Aorta (tissue), 5 donors: ENCODE measurements at regions of chr13 and their contacts with region 1.

Region 1: DNA sequence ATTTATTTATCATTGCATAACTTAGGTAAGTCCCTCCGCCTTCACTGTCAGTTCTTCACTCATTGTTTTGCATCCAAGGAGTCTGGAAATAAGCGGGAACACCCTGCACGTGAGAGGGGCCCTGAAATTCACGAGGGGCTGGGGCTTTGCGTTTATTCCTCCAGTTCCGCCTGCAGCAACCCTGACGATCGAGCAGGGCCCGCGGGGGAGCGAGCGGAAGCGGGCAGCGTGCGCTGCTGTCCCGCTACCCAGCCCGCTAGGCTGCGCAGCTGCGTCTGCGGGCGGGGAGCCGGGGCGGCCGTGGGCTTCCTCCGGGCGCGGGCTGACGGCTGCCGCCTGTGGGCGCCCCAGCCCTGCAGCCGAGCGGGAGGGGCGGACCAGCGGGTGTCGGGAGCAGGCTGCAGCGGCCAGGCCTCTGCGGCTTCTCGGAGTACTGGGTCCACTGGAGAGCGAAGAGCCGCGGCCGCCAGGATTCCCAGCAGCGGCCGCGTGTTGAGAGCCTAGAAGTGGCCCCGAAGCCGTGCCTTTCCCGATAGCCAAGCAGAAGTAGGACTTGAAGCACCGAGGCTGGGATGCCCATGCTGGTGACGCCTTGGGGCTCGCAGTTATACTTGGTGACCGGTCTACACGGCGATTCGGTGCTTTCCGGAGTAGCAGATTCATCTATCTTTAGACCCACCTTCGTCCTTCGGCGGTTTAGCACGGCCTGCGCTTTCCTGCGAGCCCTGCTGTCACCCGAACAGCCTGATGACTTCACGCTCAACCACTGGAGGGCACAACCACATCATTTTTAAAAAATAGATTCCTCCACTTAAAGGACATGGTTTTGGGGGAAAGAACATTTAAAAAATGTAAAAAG is 32.9 kb upstream of the SACS start:
- DNase-seq: peak; percentile 77 to 86
- ATAC-seq: peak; percentile 94
- H3K4me3 ChIP-seq: peak overlapping the region in 1 of 2 donors; percentile 7
- H3K27ac ChIP-seq: peak overlapping the region in 1 of 2 donors; percentile 22
- H3K4me1 ChIP-seq: peaks cover 4 to 5% of the 10 kb centered on the region in 2 donors
- H3K27me3 ChIP-seq: no peaks in the 10 kb centered on the region

Region 2: DNA sequence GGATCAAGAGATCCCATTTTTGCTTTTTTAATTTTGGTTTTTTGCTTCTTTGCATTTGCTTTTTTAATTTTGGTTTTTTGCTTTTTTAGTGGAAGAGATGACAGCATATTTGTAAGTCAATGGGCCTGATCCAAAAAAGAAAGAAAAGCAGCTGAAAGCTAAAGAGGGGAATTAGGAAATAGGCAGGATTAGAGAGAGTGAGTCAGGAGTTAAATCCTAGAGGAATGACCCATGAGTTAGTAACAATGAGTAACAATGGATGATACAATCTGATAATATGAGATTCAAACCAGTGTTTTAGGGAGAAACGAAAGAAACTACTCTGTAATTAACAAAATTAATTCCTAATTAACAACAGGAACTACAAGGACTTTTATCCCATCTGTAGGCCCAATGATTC is 396.8 kb before region 1 on chr13:
- intact Hi-C with region 1: no loop called
- DNase-seq: no peak
- ATAC-seq: no peak
- H3K4me3 ChIP-seq: no peak overlapping the region
- H3K27ac ChIP-seq: no peak overlapping the region
- H3K4me1 ChIP-seq: no peaks in the 10 kb centered on the region
- H3K27me3 ChIP-seq: no peaks in the 10 kb centered on the region

Region 3: DNA sequence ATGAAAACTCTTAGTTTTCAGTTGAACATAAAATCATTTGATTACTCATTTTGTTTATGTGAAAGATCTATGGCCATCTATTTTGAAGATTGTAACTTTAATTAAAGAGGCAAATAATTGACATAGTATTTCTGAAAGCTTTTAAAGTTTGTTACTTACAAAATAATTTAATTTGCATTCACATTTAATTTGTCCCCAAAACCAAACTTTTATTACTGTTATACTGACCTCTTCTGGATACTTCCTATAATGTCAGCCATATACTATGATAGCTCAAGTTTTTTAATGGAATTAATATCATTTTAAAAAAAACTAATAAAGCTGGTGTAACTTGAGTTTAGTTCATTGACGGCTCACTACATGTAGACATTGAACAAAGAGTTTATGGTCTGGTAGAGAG is 290.5 kb before region 1 on chr13:
- intact Hi-C with region 1: no loop called
- DNase-seq: no peak
- ATAC-seq: no peak
- H3K4me3 ChIP-seq: no peak overlapping the region
- H3K27ac ChIP-seq: no peak overlapping the region
- H3K4me1 ChIP-seq: no peaks in the 10 kb centered on the region
- H3K27me3 ChIP-seq: no peaks in the 10 kb centered on the region

Region 4: GRCh38 chr13:23477101-23477500 is 10.7 kb after region 1 on chr13:
- intact Hi-C with region 1: no loop called
- DNase-seq: no peak
- ATAC-seq: no peak
- H3K4me3 ChIP-seq: no peak overlapping the region
- H3K27ac ChIP-seq: no peak overlapping the region
- H3K4me1 ChIP-seq: no peaks in the 10 kb centered on the region
- H3K27me3 ChIP-seq: no peaks in the 10 kb centered on the region

Region 5: GRCh38 chr13:23579072-23579895 is 112.9 kb after region 1 on chr13:
- intact Hi-C with region 1: loop called in 1 of 2 experiments (anchors 5 kb)
- DNase-seq: peak; percentile 92 to 97
- ATAC-seq: peak; percentile 99
- H3K4me3 ChIP-seq: peak overlapping the region; percentile 24 to 55
- H3K27ac ChIP-seq: no peak overlapping the region
- H3K4me1 ChIP-seq: no peaks in the 10 kb centered on the region
- H3K27me3 ChIP-seq: no peaks in the 10 kb centered on the region

Region 6: DNA sequence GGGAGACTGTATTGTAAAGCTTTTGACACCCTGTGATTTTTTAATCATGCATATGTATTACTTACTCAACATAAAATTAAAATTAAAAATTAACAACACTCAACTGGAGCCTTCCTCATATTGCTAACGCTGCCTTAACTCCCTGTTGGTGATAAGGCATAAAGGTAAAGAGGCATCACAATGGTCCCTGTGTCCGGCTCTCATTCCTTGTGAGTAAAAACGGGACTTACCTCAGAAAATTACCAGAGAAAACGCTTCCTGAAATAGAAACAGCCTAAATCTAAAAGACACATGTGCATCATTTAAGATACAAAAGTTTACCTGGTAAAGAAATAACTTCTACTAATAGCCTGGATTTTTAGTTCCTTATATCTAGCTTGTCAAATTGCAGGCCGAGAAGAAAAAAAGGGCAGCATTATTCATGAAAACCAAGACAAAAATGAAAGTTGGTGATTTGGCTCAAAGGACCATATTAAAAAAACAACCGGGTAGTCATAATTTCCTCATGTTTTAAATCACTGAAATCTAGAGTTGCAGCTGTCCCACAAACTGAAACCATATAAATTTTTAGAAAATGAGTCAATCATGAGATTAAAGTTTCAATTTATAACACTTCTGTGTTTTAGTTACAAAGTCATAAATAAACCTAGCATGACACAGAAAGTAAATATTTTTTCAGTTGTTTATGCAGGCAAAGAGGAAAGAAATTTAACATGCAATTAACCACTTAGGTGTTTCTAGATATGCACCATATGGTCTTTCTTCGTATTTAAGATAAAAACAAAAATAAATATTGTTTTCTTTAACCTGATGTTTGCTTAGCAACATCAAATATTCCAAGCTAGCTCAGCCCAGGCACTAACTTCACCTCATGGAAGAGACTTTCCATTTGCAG is 328.1 kb after region 1 on chr13:
- intact Hi-C with region 1: loop called in 1 of 2 experiments (anchors 10 kb)
- DNase-seq: no peak
- ATAC-seq: no peak
- H3K4me3 ChIP-seq: no peak overlapping the region
- H3K27ac ChIP-seq: no peak overlapping the region
- H3K4me1 ChIP-seq: no peaks in the 10 kb centered on the region
- H3K27me3 ChIP-seq: no peaks in the 10 kb centered on the region

Region 7: DNA sequence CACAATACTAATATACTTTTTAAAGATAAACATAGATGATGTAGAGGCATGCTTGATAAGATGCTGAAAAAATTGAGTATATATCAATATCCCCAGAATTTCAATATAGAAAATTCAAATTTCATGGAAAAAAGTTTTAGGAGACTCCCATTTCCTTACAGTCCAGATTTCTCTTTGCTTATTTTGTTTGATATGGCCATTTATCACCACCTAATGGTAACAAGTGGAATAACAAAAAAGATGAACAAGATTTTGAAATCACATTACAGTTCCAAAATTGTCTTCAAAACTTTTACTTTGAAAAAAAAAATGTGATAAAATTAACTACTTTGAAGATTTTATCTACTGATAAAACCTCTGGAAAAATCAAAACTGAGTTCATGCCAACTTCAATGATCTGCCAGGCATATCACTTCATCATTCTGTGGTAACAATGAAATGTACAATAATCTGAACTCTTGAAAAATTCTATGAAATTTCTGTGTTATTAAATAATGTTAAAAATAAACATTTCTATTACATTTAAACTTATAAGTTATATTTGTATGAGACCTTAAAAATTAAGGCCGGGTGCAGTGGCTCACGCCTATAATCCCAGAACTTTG is 405.3 kb after region 1 on chr13:
- intact Hi-C with region 1: loop called (anchors 1 to 5 kb)
- DNase-seq: no peak
- ATAC-seq: no peak
- H3K4me3 ChIP-seq: no peak overlapping the region
- H3K27ac ChIP-seq: no peak overlapping the region
- H3K4me1 ChIP-seq: no peaks in the 10 kb centered on the region
- H3K27me3 ChIP-seq: no peaks in the 10 kb centered on the region

Region 8: DNA sequence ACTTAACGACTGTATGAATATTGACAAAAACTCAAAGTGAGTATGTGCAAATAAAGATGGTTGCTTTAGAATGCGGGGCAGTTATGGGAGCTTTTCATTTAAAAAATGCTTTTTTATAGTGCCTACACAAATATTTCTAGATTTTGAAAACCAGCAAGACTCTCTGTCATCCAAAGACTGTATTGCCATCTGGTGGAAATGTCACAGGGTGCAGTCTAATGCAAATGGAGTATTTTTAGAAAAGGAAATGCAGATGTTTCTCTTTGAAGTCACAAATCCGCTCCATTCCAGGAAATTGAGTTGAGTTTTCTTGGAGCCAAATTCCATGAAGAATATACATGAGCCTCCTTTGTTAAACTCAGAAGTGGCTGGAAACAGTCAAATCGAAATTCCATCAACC is 433.2 kb after region 1 on chr13:
- intact Hi-C with region 1: loop called in 1 of 2 experiments (anchors 5 kb)
- DNase-seq: no peak
- ATAC-seq: no peak
- H3K4me3 ChIP-seq: no peak overlapping the region
- H3K27ac ChIP-seq: no peak overlapping the region
- H3K4me1 ChIP-seq: no peaks in the 10 kb centered on the region
- H3K27me3 ChIP-seq: no peaks in the 10 kb centered on the region